Mammary epithelial cell (primary cell): ENCODE measurements at regions of chr15 and their contacts with region 1.

Region 1: DNA sequence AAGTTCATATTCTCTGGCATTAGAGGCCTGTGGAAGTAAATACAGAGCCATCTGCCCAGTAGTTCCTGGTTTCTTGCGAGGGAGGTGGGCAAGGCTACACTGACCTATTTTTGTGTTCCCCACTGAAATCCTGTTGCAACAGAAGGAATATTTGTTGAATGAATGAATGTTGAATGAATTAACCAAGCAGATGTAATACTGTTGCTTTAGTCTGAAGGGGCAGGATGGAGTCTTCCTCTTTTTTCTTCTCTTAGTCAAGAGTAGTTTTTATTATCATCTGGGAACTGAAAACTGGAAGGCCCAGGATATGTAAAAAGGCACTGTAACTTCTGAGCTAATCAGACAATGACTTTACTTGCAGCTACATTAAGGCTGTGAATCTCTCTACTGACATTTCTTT is 17.1 kb downstream of the BLOC1S6 start:
- DNase-seq: no peak
- H3K4me3 ChIP-seq: no peak overlapping the region
- H3K27ac ChIP-seq: no peak overlapping the region
- H3K4me1 ChIP-seq: no peaks in the 10 kb centered on the region
- H3K27me3 ChIP-seq: no peaks in the 10 kb centered on the region
- CTCF ChIP-seq: no peak

Region 2: GRCh38 chr15:45549541-45550220 is 54.6 kb before region 1 on chr15:
- CTCF ChIA-PET with region 1: no interaction called
- dilution Hi-C with region 1: no loop called
- in situ Hi-C with region 1: loop called in 1 of 2 experiments (anchors 10 kb)
- intact Hi-C with region 1: no loop called
- DNase-seq: peak; percentile 56
- H3K4me3 ChIP-seq: no peak overlapping the region
- H3K27ac ChIP-seq: no peak overlapping the region
- H3K4me1 ChIP-seq: peaks cover 6% of the 10 kb centered on the region
- H3K27me3 ChIP-seq: no peaks in the 10 kb centered on the region
- CTCF ChIP-seq: no peak

Region 3: GRCh38 chr15:45573961-45574629 is 30.2 kb before region 1 on chr15:
- CTCF ChIA-PET with region 1: no interaction called
- dilution Hi-C with region 1: no loop called
- in situ Hi-C with region 1: no loop called
- intact Hi-C with region 1: no loop called
- DNase-seq: no peak
- H3K4me3 ChIP-seq: no peak overlapping the region
- H3K27ac ChIP-seq: no peak overlapping the region
- H3K4me1 ChIP-seq: no peaks in the 10 kb centered on the region
- H3K27me3 ChIP-seq: peaks cover 5% of the 10 kb centered on the region
- CTCF ChIP-seq: peak; percentile 19 to 29

Region 4: DNA sequence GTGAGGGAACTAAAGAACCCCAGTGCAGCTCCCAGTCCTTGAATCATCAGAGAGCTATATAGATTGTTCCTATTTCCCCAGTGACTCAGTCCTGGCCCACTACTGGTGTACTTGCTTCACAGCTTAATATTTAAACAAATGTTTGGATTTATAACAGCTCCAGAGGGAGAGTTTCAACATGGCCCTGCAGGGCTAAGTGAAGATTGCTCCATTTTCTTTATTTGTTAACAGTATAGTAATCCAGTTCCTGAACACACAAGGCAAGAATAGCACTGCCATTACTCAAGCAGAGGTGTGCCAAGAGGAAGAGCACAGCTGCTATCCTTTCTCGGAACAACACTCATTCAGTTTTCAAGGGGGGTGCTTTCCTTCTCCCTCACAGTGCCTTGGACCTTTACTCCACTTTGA is 37.1 kb after region 1 on chr15:
- CTCF ChIA-PET with region 1: no interaction called
- dilution Hi-C with region 1: no loop called
- in situ Hi-C with region 1: no loop called
- intact Hi-C with region 1: no loop called
- DNase-seq: peak; percentile 93
- H3K4me3 ChIP-seq: peak overlapping the region in 1 of 3 experiments; percentile 26
- H3K27ac ChIP-seq: peak overlapping the region; percentile 98
- H3K4me1 ChIP-seq: peaks cover 87% of the 10 kb centered on the region
- H3K27me3 ChIP-seq: no peaks in the 10 kb centered on the region
- CTCF ChIP-seq: no peak